Posterior cingulate gyrus (tissue), 11 donors: ENCODE measurements at regions of chr5 and their contacts with region 1.

Region 1: GRCh38 chr5:133968049-133968980 is at the start of gene C5orf15:
- DNase-seq: peak; percentile 91 to 99 (median 96)

Region 2: GRCh38 chr5:134004592-134005375 is 36.5 kb after region 1 on chr5 and contains the start of gene VDAC1:
- intact Hi-C with region 1: loop called (anchors 2 kb)
- DNase-seq: peak; percentile 59 to 96 (median 82)

Region 3: DNA sequence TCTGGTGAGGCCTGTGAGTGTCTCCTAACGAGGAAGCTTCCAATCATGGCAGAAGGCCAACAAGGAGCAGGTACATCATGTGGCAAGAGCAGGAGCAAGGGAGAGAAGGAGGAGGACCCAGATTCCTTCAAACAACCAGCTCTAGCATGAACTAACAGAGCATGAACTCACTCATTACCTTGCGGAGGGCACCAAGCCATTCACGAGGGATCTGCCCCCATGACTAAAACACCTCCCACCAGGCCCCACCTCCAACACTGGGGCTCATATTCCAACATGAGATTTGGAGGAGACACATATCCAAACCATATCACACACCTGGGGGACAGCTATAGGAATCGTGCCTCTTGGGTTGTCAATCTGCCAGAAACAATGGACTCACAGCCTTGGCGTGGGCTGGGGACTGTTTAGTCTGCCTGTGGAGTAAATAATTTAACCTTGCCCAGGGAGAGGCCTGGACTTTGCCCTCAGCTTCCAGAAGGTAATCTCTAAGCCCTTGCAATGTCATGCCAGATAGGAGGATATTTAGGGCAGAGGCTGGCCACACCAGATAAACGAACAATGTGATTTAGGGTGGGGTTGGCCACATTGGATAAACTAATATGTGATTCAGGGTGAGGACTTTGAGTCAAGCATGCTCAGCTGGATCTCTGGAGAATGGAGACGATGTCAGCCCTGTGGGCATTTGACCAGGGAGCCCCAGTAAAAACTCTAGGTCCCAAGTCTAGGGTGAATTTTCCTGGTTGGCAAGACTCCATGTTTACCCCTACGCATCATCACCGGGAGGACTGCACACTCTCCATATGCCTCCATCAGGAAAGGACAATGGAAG is 50.1 kb after region 1 on chr5:
- intact Hi-C with region 1: no loop called
- DNase-seq: peak in 1 of 10 donors; percentile 11